Endothelial cell of umbilical vein (primary cell): ENCODE measurements at regions of chr3 and their contacts with region 1.

Region 1: GRCh38 chr3:128617557-128618397 is 32.8 kb downstream of the RPN1 start:
- DNase-seq: peak; percentile 98
- H3K4me3 ChIP-seq: peak overlapping the region; percentile 48 to 65 (median 58)
- H3K27ac ChIP-seq: peak overlapping the region; percentile 53
- H3K4me1 ChIP-seq: peaks cover 35% of the 10 kb centered on the region
- H3K27me3 ChIP-seq: no peaks in the 10 kb centered on the region
- CTCF ChIP-seq: peak; percentile 86 to 98
- POLR2A ChIP-seq: no peak

Region 2: DNA sequence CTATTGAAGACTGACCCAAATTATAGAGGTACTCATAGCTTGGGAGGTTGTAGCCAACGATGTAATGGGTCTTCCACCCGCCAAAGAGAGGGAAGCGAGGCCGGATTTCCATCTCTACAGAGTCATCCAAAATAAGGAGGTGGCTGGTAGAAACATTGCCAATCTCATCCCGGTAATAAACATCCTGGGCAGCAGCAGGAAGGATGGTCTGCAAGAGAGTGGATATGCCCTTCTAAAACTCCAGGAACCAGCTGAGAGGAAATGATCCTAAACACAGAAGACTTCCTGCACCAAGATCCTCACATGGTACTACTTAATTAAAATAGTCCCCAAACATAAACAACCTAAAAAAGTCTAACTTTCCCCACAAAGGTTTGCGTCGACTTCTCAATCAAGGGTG is 12.2 kb after region 1 on chr3:
- CTCF ChIA-PET with region 1: interaction called, 13 read pairs
- POLR2A ChIA-PET with region 1: no interaction called
- dilution Hi-C with region 1: no loop called
- intact Hi-C with region 1: no loop called
- DNase-seq: no peak
- H3K4me3 ChIP-seq: no peak overlapping the region
- H3K27ac ChIP-seq: peak overlapping the region; percentile 7
- H3K4me1 ChIP-seq: peaks cover 13% of the 10 kb centered on the region
- H3K27me3 ChIP-seq: no peaks in the 10 kb centered on the region
- CTCF ChIP-seq: no peak
- POLR2A ChIP-seq: no peak

Region 3: DNA sequence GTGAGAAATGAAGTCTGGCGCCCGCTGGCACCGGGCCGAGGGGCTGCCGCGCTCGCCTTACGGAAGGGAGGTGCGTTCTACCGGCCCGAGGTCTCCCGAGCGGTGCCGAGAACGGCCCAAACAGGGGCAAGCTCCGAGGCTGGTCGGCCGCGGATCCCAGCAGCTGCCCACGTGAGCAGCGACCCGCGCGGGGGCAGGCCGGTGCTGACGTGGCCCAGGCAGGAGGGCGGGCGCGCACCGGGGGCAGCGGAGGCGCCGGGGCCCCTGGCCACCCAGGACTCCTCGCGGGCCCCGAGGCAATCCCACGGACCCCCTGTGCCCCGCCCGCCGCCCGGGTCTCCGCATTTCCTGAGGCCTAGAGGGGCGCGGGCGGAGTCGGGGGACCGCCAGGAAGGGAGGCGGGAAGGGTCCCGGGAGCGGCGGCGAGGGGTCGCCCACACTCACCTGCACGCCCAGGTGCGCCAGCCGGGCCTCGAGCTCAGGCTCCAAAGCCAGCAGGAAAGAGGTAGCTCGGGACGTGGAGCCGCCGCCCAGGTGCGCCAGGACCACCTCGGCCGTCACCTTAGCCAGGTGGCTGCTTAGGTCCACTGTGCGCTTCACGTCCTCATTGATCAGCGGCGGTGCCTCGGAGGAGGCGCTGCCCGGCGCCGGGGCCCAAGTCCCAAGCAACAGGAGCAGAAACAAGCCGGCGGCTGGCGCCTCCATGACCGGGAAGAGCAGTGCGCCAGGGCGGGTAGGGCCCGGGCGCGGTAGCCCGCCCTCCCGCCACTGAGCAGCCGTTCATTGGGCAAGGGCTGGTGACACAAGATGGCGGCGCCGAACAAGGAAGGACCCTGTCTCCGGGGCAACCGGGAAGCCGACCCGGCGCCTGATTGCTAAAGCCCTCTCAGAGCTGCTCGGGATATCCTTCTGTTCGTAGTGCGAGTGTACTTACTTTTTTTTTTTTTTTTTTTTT is 32.6 kb after region 1 on chr3 and contains the start of gene RPN1:
- CTCF ChIA-PET with region 1: interaction called, 14 read pairs
- POLR2A ChIA-PET with region 1: no interaction called
- dilution Hi-C with region 1: no loop called
- intact Hi-C with region 1: no loop called
- DNase-seq: peak; percentile 97
- H3K4me3 ChIP-seq: peak within 1 kb of the TSS; percentile 92 to 99 (median 96)
- H3K27ac ChIP-seq: peak within 1 kb of the TSS; percentile 95
- H3K4me1 ChIP-seq: peaks cover 8% of the 10 kb centered on the region
- H3K27me3 ChIP-seq: no peaks in the 10 kb centered on the region
- CTCF ChIP-seq: no peak
- POLR2A ChIP-seq: peak; percentile 89
- total RNA-seq, gene RPN1: 244 and 250 TPM in 2 replicates

Region 4: DNA sequence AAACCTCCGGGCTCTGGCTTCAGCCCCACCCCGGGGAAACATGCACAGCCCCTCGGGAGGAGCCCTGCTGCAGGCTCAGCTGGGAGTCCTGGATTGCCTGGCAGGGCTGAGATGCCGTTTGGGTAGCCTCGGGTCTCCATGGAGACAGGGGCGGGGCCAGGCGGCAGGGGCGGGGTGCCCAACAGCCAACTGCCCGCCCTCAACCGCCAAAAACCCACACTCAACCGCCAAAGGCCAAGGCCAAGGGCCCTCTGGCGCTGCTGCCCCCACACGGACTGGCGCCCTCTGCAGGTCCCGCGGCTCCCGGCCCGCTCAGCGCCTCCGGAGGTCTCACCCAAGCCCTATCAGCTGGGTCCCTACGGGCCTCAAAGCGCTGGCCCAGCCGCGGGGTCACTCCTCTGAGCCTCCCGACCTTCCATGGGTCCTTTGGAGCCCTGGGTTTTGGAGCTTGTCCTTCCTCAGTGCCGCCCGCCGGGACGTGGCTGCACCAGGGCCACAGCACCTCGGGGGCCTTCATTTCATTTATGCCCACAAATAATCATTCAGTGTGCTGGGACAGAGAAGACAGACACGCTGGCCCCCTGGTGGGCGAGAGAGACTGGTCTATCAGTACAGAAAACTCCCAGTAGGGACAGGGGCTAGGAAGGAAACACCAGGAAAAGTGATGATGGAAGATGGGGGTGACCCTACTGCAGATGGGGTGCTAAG is 228.2 kb after region 1 on chr3:
- CTCF ChIA-PET with region 1: interaction called, 26 read pairs
- POLR2A ChIA-PET with region 1: no interaction called
- dilution Hi-C with region 1: no loop called
- intact Hi-C with region 1: loop called (anchors 1 kb)
- DNase-seq: peak; percentile 79
- H3K4me3 ChIP-seq: peak overlapping the region; percentile 37 to 54 (median 54)
- H3K27ac ChIP-seq: no peak overlapping the region
- H3K4me1 ChIP-seq: peaks cover 4% of the 10 kb centered on the region
- H3K27me3 ChIP-seq: no peaks in the 10 kb centered on the region
- CTCF ChIP-seq: peak; percentile 65 to 78
- POLR2A ChIP-seq: no peak